GM12878 (cell line): ENCODE measurements at regions of chr22 and their contacts with region 1.

Region 1: GRCh38 chr22:21834869-21835268 is 32.6 kb downstream of the MAPK1 start:
- DNase-seq: peak; percentile 23
- ATAC-seq: peak; percentile 77
- H3K4me3 ChIP-seq: no peak overlapping the region
- H3K27ac ChIP-seq: no peak overlapping the region
- H3K4me1 ChIP-seq: peaks cover 10% of the 10 kb centered on the region; the same call in 1 of the 2 replicates
- H3K27me3 ChIP-seq: no peaks in the 10 kb centered on the region
- CTCF ChIP-seq: no peak
- EP300 ChIP-seq: no peak
- POLR2A ChIP-seq: no peak
- RAD21 ChIP-seq: no peak

Region 2: DNA sequence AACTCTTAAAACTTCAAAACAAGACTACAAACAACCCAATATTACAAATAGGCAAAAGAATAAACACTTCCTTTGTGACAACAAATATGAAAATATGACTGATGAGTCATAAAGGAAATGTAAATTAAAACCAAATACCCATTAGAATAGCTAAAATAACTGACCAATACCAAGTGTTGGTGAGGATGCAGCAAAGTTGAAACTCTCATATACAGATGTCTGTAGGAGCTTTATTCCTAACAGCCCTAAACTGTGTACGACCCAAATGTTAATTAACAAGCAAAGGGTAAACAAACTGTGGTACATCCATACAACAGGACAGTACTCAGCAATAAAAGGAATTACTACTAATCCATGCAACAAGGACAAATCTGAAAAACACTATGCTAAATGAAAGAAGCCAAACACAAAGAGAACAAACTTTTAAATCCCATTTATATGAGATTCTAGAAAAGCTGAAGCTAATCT is 10.4 kb before region 1 on chr22:
- CTCF ChIA-PET with region 1: no interaction called
- POLR2A ChIA-PET with region 1: interaction called, 6 read pairs
- RAD21 ChIA-PET with region 1: no interaction called
- SMC1A ChIA-PET with region 1: interaction called, 11 read pairs
- in situ Hi-C with region 1: no loop called
- intact Hi-C with region 1: no loop called
- DNase-seq: no peak
- ATAC-seq: peak; percentile 78
- H3K4me3 ChIP-seq: no peak overlapping the region
- H3K27ac ChIP-seq: no peak overlapping the region
- H3K4me1 ChIP-seq: peaks cover 10% of the 10 kb centered on the region
- H3K27me3 ChIP-seq: no peaks in the 10 kb centered on the region
- CTCF ChIP-seq: no peak
- EP300 ChIP-seq: no peak
- POLR2A ChIP-seq: no peak
- RAD21 ChIP-seq: no peak